A673 (cell line): ENCODE measurements at regions of chr1 and their contacts with region 1.

Region 1: GRCh38 chr1:156065212-156065611 is 4.3 kb downstream of the RAB25 start:
- DNase-seq: no peak
- H3K4me3 ChIP-seq: no peak overlapping the region
- H3K27ac ChIP-seq: no peak overlapping the region
- H3K4me1 ChIP-seq: peaks cover 11% of the 10 kb centered on the region
- H3K27me3 ChIP-seq: no peaks in the 10 kb centered on the region
- CTCF ChIP-seq: no peak

Region 2: DNA sequence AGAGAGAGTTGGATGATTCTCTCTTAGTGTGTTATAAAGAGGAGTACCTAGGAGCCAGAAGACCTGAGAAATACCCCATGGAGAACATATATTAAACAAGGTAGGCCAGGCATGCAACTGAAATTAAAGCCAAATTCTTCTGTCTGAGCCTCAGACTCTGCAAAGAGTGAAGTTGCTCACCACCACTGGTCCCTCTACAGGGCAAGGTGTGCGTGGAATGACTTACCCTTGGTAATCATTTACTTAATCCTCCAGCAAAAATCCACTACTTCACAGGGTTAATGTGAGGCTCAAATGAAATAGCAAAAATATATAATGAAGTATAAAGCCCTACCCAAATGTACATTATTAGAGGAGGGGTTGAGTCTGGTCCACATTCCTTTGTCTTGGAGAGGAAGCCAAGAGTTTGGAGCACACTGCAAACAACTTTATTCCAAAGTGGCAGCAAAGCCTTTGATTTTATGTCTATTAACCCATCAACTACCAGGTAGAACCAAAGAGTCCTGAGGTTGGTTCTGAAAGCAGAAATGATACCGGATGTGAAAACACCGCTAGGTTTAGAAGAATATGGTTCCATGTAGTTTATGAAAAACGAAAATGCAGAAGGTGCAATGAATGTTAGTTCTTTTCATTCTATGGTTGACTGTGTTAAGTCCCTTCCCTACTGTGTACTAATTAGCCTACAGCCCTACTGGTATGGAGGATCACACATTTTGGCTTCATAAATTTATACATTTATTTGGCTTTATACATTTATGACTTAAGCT is 53.0 kb before region 1 on chr1:
- CTCF ChIA-PET with region 1: interaction called, 10 read pairs
- POLR2A ChIA-PET with region 1: no interaction called
- intact Hi-C with region 1: no loop called
- DNase-seq: no peak
- H3K4me3 ChIP-seq: no peak overlapping the region
- H3K27ac ChIP-seq: no peak overlapping the region
- H3K4me1 ChIP-seq: no peaks in the 10 kb centered on the region
- H3K27me3 ChIP-seq: no peaks in the 10 kb centered on the region
- CTCF ChIP-seq: no peak

Region 3: DNA sequence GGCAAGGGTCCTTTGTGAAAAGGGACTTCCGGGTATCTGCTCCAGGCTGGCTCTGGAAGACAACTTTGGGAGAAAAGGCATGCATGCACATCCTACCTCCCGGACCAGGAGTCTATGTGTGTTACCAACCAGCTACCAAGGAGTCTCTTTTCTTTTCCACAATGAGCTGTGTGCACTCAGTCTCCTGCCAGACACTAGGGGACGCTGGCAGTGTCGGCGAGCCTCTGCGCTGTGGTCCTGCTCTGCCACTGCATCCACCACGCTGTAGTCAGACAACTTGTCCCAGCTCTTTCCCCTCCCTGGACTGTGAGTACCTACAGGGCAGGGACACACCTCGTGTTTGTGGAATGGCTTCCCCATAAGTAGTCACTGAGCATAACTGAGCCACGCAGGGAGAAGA is 39.3 kb before region 1 on chr1:
- CTCF ChIA-PET with region 1: interaction called, 10 read pairs
- POLR2A ChIA-PET with region 1: no interaction called
- intact Hi-C with region 1: no loop called
- DNase-seq: peak; percentile 78
- H3K4me3 ChIP-seq: no peak overlapping the region
- H3K27ac ChIP-seq: no peak overlapping the region
- H3K4me1 ChIP-seq: no peaks in the 10 kb centered on the region
- H3K27me3 ChIP-seq: no peaks in the 10 kb centered on the region
- CTCF ChIP-seq: peak; percentile 84

Region 4: GRCh38 chr1:156096640-156097391 is 31.6 kb after region 1 on chr1:
- CTCF ChIA-PET with region 1: no interaction called
- POLR2A ChIA-PET with region 1: no interaction called
- intact Hi-C with region 1: no loop called
- DNase-seq: peak; percentile 90
- H3K4me3 ChIP-seq: no peak overlapping the region
- H3K27ac ChIP-seq: no peak overlapping the region
- H3K4me1 ChIP-seq: peaks cover 15% of the 10 kb centered on the region
- H3K27me3 ChIP-seq: no peaks in the 10 kb centered on the region
- CTCF ChIP-seq: peak; percentile 99